Mammary epithelial cell (primary cell): ENCODE measurements at regions of chr11 and their contacts with region 1.

Region 1: DNA sequence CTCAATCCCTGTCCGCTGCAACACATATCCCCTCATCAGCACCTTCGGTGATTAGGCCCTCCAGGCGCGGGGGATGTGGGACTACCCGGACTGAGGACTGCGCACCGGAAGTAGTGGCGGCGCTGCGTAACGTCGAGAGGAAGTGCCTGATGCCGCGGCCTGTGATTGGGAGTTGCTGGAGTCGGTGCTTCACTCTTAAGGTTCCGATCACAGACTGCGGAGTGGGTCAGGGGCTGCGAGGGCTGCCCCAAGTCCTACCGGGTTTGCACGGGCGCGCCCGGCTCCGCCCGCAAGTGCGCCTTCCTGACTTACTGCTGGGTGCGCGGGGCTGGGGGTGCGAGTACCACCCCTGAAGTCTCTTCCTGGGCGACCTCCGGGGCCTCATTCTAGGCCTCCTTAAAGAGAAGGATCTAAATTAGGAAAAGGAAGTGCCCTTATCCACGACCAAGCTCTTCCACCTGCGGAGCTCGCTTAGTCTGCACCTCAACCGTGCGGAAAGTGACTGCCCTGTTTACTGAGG is at the start of gene ALKBH3:
- DNase-seq: peak; percentile 85
- H3K4me3 ChIP-seq: peak within 1 kb of the TSS; percentile 85 to 96 (median 87)
- H3K27ac ChIP-seq: peak within 1 kb of the TSS; percentile 52
- H3K4me1 ChIP-seq: peaks cover 12% of the 10 kb centered on the region
- H3K27me3 ChIP-seq: no peaks in the 10 kb centered on the region
- CTCF ChIP-seq: no peak
- total RNA-seq, gene ALKBH3: 38.8 to 50.7 TPM

Region 2: GRCh38 chr11:43830928-43831440 is 49.7 kb before region 1 on chr11:
- CTCF ChIA-PET with region 1: no interaction called
- dilution Hi-C with region 1: no loop called
- in situ Hi-C with region 1: no loop called
- intact Hi-C with region 1: loop called (anchors 2 kb)
- DNase-seq: peak; percentile 100
- H3K4me3 ChIP-seq: peak overlapping the region in 1 of 3 experiments; percentile 14
- H3K27ac ChIP-seq: peak overlapping the region; percentile 46
- H3K4me1 ChIP-seq: peaks cover 31% of the 10 kb centered on the region
- H3K27me3 ChIP-seq: no peaks in the 10 kb centered on the region
- CTCF ChIP-seq: no peak

Region 3: GRCh38 chr11:44029977-44030911 is 149.5 kb after region 1 on chr11:
- CTCF ChIA-PET with region 1: no interaction called
- dilution Hi-C with region 1: no loop called
- in situ Hi-C with region 1: loop called in 1 of 2 experiments (anchors 10 kb)
- intact Hi-C with region 1: no loop called
- DNase-seq: no peak
- H3K4me3 ChIP-seq: no peak overlapping the region
- H3K27ac ChIP-seq: no peak overlapping the region
- H3K4me1 ChIP-seq: no peaks in the 10 kb centered on the region
- H3K27me3 ChIP-seq: no peaks in the 10 kb centered on the region
- CTCF ChIP-seq: no peak

Region 4: GRCh38 chr11:44046182-44046581 is 165.5 kb after region 1 on chr11:
- CTCF ChIA-PET with region 1: no interaction called
- dilution Hi-C with region 1: no loop called
- in situ Hi-C with region 1: no loop called
- intact Hi-C with region 1: no loop called
- DNase-seq: no peak
- H3K4me3 ChIP-seq: no peak overlapping the region
- H3K27ac ChIP-seq: no peak overlapping the region
- H3K4me1 ChIP-seq: no peaks in the 10 kb centered on the region
- H3K27me3 ChIP-seq: peaks cover 2% of the 10 kb centered on the region
- CTCF ChIP-seq: no peak